Right lobe of liver (tissue), 6 donors: ENCODE measurements at regions of chr18 and their contacts with region 1.

Region 1: GRCh38 chr18:58128381-58129374 is 84.7 kb downstream of the NEDD4L start:
- DNase-seq: peak in 1 of 3 donors; percentile 55
- ATAC-seq: peak; percentile 96 to 99 (median 96)
- H3K4me3 ChIP-seq: no peak overlapping the region
- H3K27ac ChIP-seq: peak overlapping the region; percentile 12 to 60 (median 28)
- H3K4me1 ChIP-seq: peaks cover 0 to 13% (median 5%) of the 10 kb centered on the region in 4 donors
- H3K27me3 ChIP-seq: no peaks in the 10 kb centered on the region
- CTCF ChIP-seq: peak in 2 of 4 donors; percentile 18 to 22
- POLR2A ChIP-seq: no peak

Region 2: GRCh38 chr18:57784034-57784800 is 344.5 kb before region 1 on chr18:
- intact Hi-C with region 1: no loop called
- DNase-seq: no peak
- ATAC-seq: peak; percentile 15 to 56 (median 48)
- H3K4me3 ChIP-seq: no peak overlapping the region
- H3K27ac ChIP-seq: peak overlapping the region in 2 of 3 donors; percentile 37 to 66
- H3K4me1 ChIP-seq: peaks cover 0 to 36% (median 13%) of the 10 kb centered on the region in 4 donors
- H3K27me3 ChIP-seq: no peaks in the 10 kb centered on the region
- CTCF ChIP-seq: no peak
- POLR2A ChIP-seq: no peak

Region 3: GRCh38 chr18:57881818-57882413 is 246.8 kb before region 1 on chr18:
- intact Hi-C with region 1: loop called in 1 of 2 experiments (anchors 10 kb)
- DNase-seq: peak; percentile 45 to 69 (median 67)
- ATAC-seq: peak; percentile 98 to 100 (median 99)
- H3K4me3 ChIP-seq: no peak overlapping the region
- H3K27ac ChIP-seq: no peak overlapping the region
- H3K4me1 ChIP-seq: no peaks in the 10 kb centered on the region
- H3K27me3 ChIP-seq: no peaks in the 10 kb centered on the region
- CTCF ChIP-seq: peak; percentile 91 to 95 (median 92)
- POLR2A ChIP-seq: no peak

Region 4: GRCh38 chr18:57959278-57959677 is 169.4 kb before region 1 on chr18:
- intact Hi-C with region 1: loop called in 1 of 2 experiments (anchors 10 kb)
- DNase-seq: peak; percentile 49 to 60 (median 54)
- ATAC-seq: peak; percentile 91 to 99 (median 94)
- H3K4me3 ChIP-seq: no peak overlapping the region
- H3K27ac ChIP-seq: no peak overlapping the region
- H3K4me1 ChIP-seq: no peaks in the 10 kb centered on the region
- H3K27me3 ChIP-seq: no peaks in the 10 kb centered on the region
- CTCF ChIP-seq: peak; percentile 35 to 52 (median 43)
- POLR2A ChIP-seq: no peak

Region 5: GRCh38 chr18:58043491-58044379 is 84.9 kb before region 1 on chr18 and contains the start of gene NEDD4L:
- intact Hi-C with region 1: loop called in 1 of 2 experiments (anchors 10 kb)
- DNase-seq: peak; percentile 91 to 92 (median 91)
- ATAC-seq: peak; percentile 74 to 88 (median 82)
- H3K4me3 ChIP-seq: peak within 1 kb of the TSS; percentile 61 to 86 (median 81)
- H3K27ac ChIP-seq: peak within 1 kb of the TSS; percentile 87 to 95 (median 91)
- H3K4me1 ChIP-seq: peaks cover 0 to 26% (median 0%) of the 10 kb centered on the region in 4 donors
- H3K27me3 ChIP-seq: no peaks in the 10 kb centered on the region
- CTCF ChIP-seq: peak; percentile 88 to 91 (median 90)
- POLR2A ChIP-seq: no peak
- total RNA-seq, gene NEDD4L: 21.5 to 41.0 (median 33.2) TPM